Caki2 (cell line): ENCODE measurements at regions of chr7 and their contacts with region 1.

Region 1: DNA sequence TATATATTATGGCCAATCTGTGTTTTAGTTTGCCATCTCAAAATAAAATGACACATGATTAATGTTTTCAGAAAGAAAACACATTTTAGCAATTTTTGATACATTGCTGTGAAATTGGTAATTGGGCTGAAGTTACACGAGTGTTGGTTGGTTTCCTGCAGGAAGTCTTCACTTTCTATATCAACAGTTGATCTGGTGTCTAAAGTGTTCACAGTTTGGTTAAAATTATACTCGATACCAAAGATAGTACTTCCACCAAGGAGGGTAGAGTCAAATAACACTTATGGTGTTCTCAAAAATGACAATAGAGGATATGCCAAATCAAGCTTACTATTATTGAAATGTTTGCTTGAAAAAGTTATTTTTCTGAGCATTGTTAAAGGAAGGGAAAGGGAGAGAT is 120.3 kb upstream of the GLCCI1 start:
- DNase-seq: no peak

Region 2: GRCh38 chr7:7566651-7567611 is 281.3 kb before region 1 on chr7 and contains the start of gene MIOS:
- in situ Hi-C with region 1: loop called (anchors 10 kb)
- DNase-seq: peak; percentile 93
- total RNA-seq, gene MIOS: 24.3 and 41.0 TPM in 2 replicates